ENCODE measurements at regions of chr3 and their contacts with region 1.

Region 1: DNA sequence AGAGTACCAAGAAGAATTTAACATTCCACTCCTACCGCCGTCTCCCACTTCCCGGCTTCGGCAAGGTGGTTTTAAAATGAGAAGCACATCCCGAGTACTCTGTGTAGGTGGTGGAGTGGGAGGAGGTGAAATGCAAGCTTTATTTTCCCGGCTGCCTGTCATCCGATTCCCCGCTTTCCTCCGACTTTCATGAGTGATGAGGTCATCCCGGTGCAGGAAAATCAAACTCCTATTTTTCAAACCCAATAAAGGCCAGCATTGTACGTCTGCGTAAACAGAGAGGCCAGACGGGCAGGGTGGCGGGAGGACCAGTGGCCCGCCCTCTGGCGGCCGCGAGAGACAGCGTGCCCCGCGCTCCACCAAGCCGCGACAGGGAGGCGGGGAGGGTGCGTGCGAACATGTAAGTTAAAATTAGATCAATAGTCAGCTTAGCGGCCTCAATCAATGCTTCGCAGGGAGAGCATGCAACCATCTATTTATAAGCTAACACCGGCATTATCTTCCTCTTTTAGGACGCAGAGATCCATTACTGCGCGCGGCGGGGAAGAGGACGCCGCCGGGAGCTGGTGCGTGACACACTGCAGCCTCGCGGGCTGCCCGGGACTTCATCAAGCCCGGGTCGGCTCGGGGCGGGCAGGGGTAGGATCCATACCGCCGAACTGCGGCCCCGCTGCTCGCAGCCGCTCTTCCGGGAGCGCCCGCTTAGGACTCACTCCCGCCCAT is 163.3 kb downstream of the CD47 start:
- DNase-seq: peak; percentile 81
- H3K4me3 ChIP-seq: peak overlapping the region; percentile 67 to 73 (median 68)
- H3K27ac ChIP-seq: no peak overlapping the region
- H3K4me1 ChIP-seq: peaks cover 11% of the 10 kb centered on the region
- H3K27me3 ChIP-seq: peaks cover 0 to 2% of the 10 kb centered on the region in 2 experiments
- CTCF ChIP-seq: peak; percentile 93 to 96
- POLR2A ChIP-seq: no peak

Region 2: GRCh38 chr3:107740992-107741896 is 186.3 kb before region 1 on chr3:
- CTCF ChIA-PET with region 1: no interaction called
- POLR2A ChIA-PET with region 1: no interaction called
- dilution Hi-C with region 1: no loop called
- intact Hi-C with region 1: no loop called
- DNase-seq: peak; percentile 59
- H3K4me3 ChIP-seq: no peak overlapping the region
- H3K27ac ChIP-seq: no peak overlapping the region
- H3K4me1 ChIP-seq: no peaks in the 10 kb centered on the region
- H3K27me3 ChIP-seq: no peaks in the 10 kb centered on the region
- CTCF ChIP-seq: peak in 1 of 2 donors; percentile 25
- POLR2A ChIP-seq: no peak

Region 3: GRCh38 chr3:107753480-107753879 is 174.0 kb before region 1 on chr3:
- CTCF ChIA-PET with region 1: no interaction called
- POLR2A ChIA-PET with region 1: no interaction called
- dilution Hi-C with region 1: no loop called
- intact Hi-C with region 1: loop called (anchors 5 kb)
- DNase-seq: peak; percentile 47
- H3K4me3 ChIP-seq: no peak overlapping the region
- H3K27ac ChIP-seq: no peak overlapping the region
- H3K4me1 ChIP-seq: no peaks in the 10 kb centered on the region
- H3K27me3 ChIP-seq: no peaks in the 10 kb centered on the region
- CTCF ChIP-seq: peak; percentile 29 to 52
- POLR2A ChIP-seq: no peak

Region 4: DNA sequence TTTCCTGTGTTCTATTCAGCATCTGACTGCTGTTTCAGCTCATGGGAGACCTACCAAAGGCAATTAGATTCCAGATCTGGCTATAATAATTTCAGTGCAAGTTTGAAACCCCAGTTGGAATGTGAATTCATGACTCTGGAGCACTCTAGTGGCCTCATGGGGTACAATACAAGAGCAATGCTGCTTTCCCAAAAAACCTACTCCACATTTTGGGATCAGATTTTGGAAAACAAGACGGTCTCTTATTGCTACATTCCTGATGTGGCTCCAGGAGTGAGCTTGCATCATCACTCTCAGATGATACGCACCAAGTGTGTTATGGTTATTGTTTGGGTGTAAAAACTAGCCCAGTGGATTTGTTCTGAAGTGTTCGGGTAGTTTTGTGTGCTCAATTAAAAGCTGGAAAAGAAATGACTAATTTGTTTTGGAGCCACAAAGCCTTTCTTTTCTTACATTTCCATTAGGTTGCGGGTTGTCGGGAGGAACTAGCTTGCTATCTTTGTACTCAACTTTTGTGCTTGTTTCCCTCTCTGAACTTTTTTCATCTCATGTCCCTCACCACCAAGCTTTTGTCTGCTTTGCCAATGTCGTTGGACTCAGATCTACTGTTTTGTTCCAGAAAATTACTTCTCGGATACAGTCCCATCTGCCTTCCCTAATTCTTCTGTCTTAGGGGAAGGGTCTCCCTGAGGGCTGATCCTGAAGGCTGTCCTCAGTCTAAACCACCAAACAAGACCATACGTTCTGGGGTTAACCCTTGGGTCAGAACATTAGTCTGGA is 132.7 kb before region 1 on chr3:
- CTCF ChIA-PET with region 1: no interaction called
- POLR2A ChIA-PET with region 1: no interaction called
- dilution Hi-C with region 1: no loop called
- intact Hi-C with region 1: no loop called
- DNase-seq: no peak
- H3K4me3 ChIP-seq: no peak overlapping the region
- H3K27ac ChIP-seq: no peak overlapping the region
- H3K4me1 ChIP-seq: no peaks in the 10 kb centered on the region
- H3K27me3 ChIP-seq: no peaks in the 10 kb centered on the region
- CTCF ChIP-seq: peak in 1 of 2 donors; percentile 4
- POLR2A ChIP-seq: no peak

Region 5: GRCh38 chr3:107956991-107957900 is 29.7 kb after region 1 on chr3:
- CTCF ChIA-PET with region 1: interaction called, 10 read pairs
- POLR2A ChIA-PET with region 1: no interaction called
- dilution Hi-C with region 1: no loop called
- intact Hi-C with region 1: no loop called
- DNase-seq: peak; percentile 81
- H3K4me3 ChIP-seq: no peak overlapping the region
- H3K27ac ChIP-seq: no peak overlapping the region
- H3K4me1 ChIP-seq: peaks cover 30% of the 10 kb centered on the region
- H3K27me3 ChIP-seq: no peaks in the 10 kb centered on the region
- CTCF ChIP-seq: no peak
- POLR2A ChIP-seq: no peak

Region 6: DNA sequence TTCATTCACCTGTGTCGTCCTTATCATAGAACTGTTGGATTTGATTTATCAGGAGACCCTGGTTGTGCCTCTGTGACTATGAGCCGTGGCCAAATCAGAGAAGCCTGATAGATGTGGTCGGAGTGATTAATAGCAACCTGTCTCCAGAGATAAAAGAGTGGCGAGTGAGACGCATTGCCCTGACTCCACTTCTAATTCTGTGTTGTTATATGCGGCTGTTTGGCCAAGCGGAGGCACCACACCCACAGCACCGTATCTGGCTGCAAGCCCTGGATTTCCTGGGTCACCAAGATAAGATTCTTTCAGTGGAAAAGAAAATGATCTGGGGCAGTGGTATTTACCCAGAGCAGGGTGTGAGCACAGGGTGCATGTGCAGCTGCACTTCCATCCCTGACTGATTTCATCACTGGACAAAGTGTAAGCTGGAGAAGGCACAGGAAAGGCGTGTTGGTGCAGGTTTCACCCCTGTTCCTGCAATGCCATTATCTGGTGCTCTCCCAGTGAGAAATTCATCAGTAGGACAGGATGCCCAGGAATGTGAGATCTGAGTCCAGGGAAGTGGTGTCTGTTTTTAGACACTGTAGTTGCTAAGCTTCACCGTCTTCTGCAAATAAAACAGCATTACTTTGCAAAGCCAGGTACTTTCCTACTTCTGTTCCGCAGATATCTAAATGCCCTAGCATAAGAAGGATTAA is 78.7 kb after region 1 on chr3:
- CTCF ChIA-PET with region 1: interaction called, 10 read pairs
- POLR2A ChIA-PET with region 1: no interaction called
- dilution Hi-C with region 1: no loop called
- intact Hi-C with region 1: no loop called
- DNase-seq: peak; percentile 60
- H3K4me3 ChIP-seq: no peak overlapping the region
- H3K27ac ChIP-seq: no peak overlapping the region
- H3K4me1 ChIP-seq: peaks cover 12% of the 10 kb centered on the region
- H3K27me3 ChIP-seq: no peaks in the 10 kb centered on the region
- CTCF ChIP-seq: no peak
- POLR2A ChIP-seq: no peak

Region 7: GRCh38 chr3:108477511-108478147 is 550.1 kb after region 1 on chr3:
- CTCF ChIA-PET with region 1: interaction called, 33 read pairs
- POLR2A ChIA-PET with region 1: no interaction called
- dilution Hi-C with region 1: no loop called
- intact Hi-C with region 1: no loop called
- DNase-seq: peak; percentile 77
- H3K4me3 ChIP-seq: no peak overlapping the region
- H3K27ac ChIP-seq: no peak overlapping the region
- H3K4me1 ChIP-seq: peaks cover 2% of the 10 kb centered on the region
- H3K27me3 ChIP-seq: no peaks in the 10 kb centered on the region
- CTCF ChIP-seq: peak; percentile 55 to 57
- POLR2A ChIP-seq: no peak

Measured in endothelial cell of umbilical vein (primary cell).